ENCODE measurements at regions of chr18 and their contacts with region 1.

Region 1: DNA sequence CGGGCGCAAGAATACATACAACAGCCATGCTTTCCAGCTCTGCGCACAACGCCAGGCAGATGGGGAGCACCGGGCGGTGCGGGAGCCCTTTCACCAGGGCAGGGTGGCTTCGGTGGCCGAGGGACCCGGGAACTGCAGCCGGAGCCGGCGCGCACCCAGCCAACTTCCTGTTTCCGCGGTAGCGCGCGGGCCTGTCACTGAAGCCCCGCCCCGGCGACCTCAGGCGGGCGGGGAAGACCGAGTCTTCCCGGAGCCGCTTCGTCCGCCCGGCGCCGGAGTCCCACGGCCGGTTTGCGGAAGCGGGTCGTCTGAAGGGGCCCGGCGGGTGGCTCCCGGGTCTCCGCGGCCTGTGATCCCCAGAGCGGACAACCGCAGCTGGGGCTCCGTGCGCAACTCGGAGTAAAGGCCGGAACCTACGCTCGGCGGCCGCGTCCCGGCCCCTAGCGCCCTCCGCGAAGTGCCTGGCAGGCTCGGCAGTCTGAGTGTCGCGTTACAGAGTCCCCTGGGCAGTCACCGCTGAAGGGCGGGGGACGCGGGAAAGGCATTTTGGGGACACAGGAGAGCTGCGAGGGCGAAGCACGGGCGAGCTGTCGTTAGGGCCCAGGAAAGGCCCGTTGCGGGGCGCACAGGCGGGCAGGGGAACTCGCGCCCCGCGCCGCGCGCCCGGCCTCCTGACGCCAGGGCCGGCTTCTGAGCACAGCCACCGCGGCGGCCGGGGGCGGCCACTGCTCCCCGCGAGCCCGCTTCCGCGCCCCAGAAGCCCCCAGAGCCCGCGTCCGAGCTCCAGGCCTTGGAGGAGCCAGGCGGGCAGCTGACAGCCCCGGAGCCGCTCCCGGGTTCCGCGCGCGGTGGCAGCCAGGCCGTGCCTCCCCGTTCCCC is at the start of gene MPPE1:
- DNase-seq: peak; percentile 89
- H3K4me3 ChIP-seq: peak within 1 kb of the TSS; percentile 69
- H3K27ac ChIP-seq: peak within 1 kb of the TSS; percentile 100
- H3K4me1 ChIP-seq: no peaks in the 10 kb centered on the region
- H3K27me3 ChIP-seq: no peaks in the 10 kb centered on the region
- CTCF ChIP-seq: no peak
- total RNA-seq, gene MPPE1: 36.8 to 47.9 TPM

Region 2: GRCh38 chr18:11752116-11752911 is 156.1 kb before region 1 on chr18:
- intact Hi-C with region 1: no loop called
- DNase-seq: no peak
- H3K4me3 ChIP-seq: no peak overlapping the region
- H3K27ac ChIP-seq: no peak overlapping the region
- H3K4me1 ChIP-seq: no peaks in the 10 kb centered on the region
- H3K27me3 ChIP-seq: peaks cover 13% of the 10 kb centered on the region
- CTCF ChIP-seq: no peak

Region 3: GRCh38 chr18:11826836-11827235 is 81.6 kb before region 1 on chr18:
- intact Hi-C with region 1: no loop called
- DNase-seq: no peak
- H3K4me3 ChIP-seq: no peak overlapping the region
- H3K27ac ChIP-seq: no peak overlapping the region
- H3K4me1 ChIP-seq: no peaks in the 10 kb centered on the region
- H3K27me3 ChIP-seq: no peaks in the 10 kb centered on the region
- CTCF ChIP-seq: no peak

Region 4: GRCh38 chr18:11851146-11851805 is 57.1 kb before region 1 on chr18 and contains the start of gene CHMP1B:
- intact Hi-C with region 1: loop called (anchors 10 kb)
- DNase-seq: peak; percentile 99
- H3K4me3 ChIP-seq: peak within 1 kb of the TSS; percentile 77
- H3K27ac ChIP-seq: peak within 1 kb of the TSS; percentile 84
- H3K4me1 ChIP-seq: peaks cover 13% of the 10 kb centered on the region
- H3K27me3 ChIP-seq: no peaks in the 10 kb centered on the region
- CTCF ChIP-seq: no peak
- total RNA-seq, gene CHMP1B: 42.3 to 80.1 TPM

Region 5: DNA sequence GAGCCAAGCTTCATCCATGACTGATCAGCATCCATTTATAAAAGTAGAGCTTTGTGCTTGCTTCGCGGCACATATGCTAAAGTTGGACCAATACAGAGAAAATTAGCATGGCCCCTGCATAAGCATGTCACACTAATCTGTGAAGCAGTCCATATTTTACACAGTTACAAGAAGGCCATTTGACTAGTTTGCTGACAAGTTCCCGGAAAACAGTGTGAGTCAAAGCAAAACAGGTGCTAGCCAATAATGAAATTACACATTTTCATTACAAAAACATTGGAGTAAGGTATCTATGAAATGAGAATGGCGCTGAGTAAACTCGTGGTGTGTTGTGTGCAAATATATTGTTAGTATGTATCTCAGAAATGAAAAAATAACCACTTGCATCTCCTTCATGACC is 190.0 kb after region 1 on chr18:
- intact Hi-C with region 1: no loop called
- DNase-seq: no peak
- H3K4me3 ChIP-seq: no peak overlapping the region
- H3K27ac ChIP-seq: no peak overlapping the region
- H3K4me1 ChIP-seq: no peaks in the 10 kb centered on the region
- H3K27me3 ChIP-seq: no peaks in the 10 kb centered on the region
- CTCF ChIP-seq: no peak

Region 6: GRCh38 chr18:12420831-12421421 is 512.5 kb after region 1 on chr18:
- intact Hi-C with region 1: no loop called
- DNase-seq: no peak
- H3K4me3 ChIP-seq: peak overlapping the region; percentile 62
- H3K27ac ChIP-seq: no peak overlapping the region
- H3K4me1 ChIP-seq: no peaks in the 10 kb centered on the region
- H3K27me3 ChIP-seq: no peaks in the 10 kb centered on the region
- CTCF ChIP-seq: no peak